Naive thymus-derived CD4-positive, alpha-beta T cell (primary cell): ENCODE measurements at regions of chr6 and their contacts with region 1.

Region 1: DNA sequence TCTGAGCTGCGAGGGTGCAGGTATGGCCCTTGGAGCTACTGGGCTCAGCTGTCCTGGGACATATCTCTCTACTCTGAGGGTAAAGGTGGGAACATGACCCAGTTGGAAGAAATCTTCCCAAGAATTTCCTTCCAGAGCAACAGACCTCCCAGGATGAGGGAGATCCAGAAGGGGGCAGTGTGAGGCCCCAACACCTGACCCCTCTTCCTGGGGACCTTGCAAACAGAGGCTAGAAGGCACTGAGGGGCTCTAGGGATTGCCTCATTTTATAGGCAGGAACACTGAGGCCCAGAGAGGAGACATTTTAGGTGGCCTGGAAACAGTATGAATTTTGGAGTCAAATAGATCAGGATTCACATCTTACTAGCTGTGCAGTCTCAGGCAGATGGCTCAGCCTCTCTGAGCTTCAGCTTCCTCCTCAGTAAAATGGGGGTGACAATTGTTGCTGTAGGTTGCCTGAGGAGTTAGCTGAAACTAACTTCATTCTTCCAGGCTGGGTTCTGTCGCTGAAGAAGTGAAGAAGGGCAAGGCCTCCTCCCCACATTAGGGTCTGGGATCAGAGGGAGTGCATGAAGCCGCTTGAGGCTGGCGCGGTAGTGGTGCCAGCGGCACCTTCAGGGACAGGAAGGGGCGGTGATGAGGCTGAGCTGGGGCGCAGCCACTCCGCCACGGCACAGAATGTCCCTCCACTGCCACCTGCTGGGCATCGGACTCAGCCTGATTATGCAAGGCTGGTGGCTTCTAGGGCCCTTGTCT is 11.4 kb downstream of the KCNK17 start:
- DNase-seq: peak; percentile 60 to 86 (median 79)
- ATAC-seq: peak; percentile 94
- H3K4me3 ChIP-seq: peak overlapping the region; percentile 45
- H3K4me3 Mint-ChIP-seq: peak overlapping the region; percentile 28 to 86 (median 76)
- H3K27ac ChIP-seq: no peak overlapping the region
- H3K27ac Mint-ChIP-seq: peak overlapping the region in 3 of 9 donors; percentile 16 to 48 (median 18)
- H3K4me1 ChIP-seq: no peaks in the 10 kb centered on the region
- H3K4me1 Mint-ChIP-seq: peaks cover 0 to 9% (median 4%) of the 10 kb centered on the region in 7 donors
- H3K27me3 ChIP-seq: no peaks in the 10 kb centered on the region
- H3K27me3 Mint-ChIP-seq: peaks cover 0 to 6% (median 0%) of the 10 kb centered on the region in 5 donors

Region 2: GRCh38 chr6:38901802-38902522 is 400.9 kb before region 1 on chr6:
- CTCF ChIA-PET with region 1: no interaction called
- POLR2A ChIA-PET with region 1: no interaction called
- intact Hi-C with region 1: no loop called
- DNase-seq: no peak
- ATAC-seq: no peak
- H3K4me3 ChIP-seq: no peak overlapping the region
- H3K4me3 Mint-ChIP-seq: no peak overlapping the region
- H3K27ac ChIP-seq: no peak overlapping the region
- H3K27ac Mint-ChIP-seq: no peak overlapping the region
- H3K4me1 ChIP-seq: no peaks in the 10 kb centered on the region
- H3K4me1 Mint-ChIP-seq: no peaks in the 10 kb centered on the region
- H3K27me3 ChIP-seq: no peaks in the 10 kb centered on the region
- H3K27me3 Mint-ChIP-seq: peaks cover 4 to 17% (median 10%) of the 10 kb centered on the region in 5 donors

Region 3: GRCh38 chr6:38912378-38912777 is 390.5 kb before region 1 on chr6:
- CTCF ChIA-PET with region 1: no interaction called
- POLR2A ChIA-PET with region 1: no interaction called
- intact Hi-C with region 1: no loop called
- DNase-seq: no peak
- ATAC-seq: no peak
- H3K4me3 ChIP-seq: no peak overlapping the region
- H3K4me3 Mint-ChIP-seq: no peak overlapping the region
- H3K27ac ChIP-seq: no peak overlapping the region
- H3K27ac Mint-ChIP-seq: no peak overlapping the region
- H3K4me1 ChIP-seq: no peaks in the 10 kb centered on the region
- H3K4me1 Mint-ChIP-seq: no peaks in the 10 kb centered on the region
- H3K27me3 ChIP-seq: peaks cover 0 to 3% of the 10 kb centered on the region in 2 donors
- H3K27me3 Mint-ChIP-seq: peaks cover 0 to 6% (median 0%) of the 10 kb centered on the region in 5 donors

Region 4: GRCh38 chr6:38955861-38956260 is 347.0 kb before region 1 on chr6:
- CTCF ChIA-PET with region 1: no interaction called
- POLR2A ChIA-PET with region 1: no interaction called
- intact Hi-C with region 1: no loop called
- DNase-seq: no peak
- ATAC-seq: no peak
- H3K4me3 ChIP-seq: no peak overlapping the region
- H3K4me3 Mint-ChIP-seq: no peak overlapping the region
- H3K27ac ChIP-seq: no peak overlapping the region
- H3K27ac Mint-ChIP-seq: no peak overlapping the region
- H3K4me1 ChIP-seq: no peaks in the 10 kb centered on the region
- H3K4me1 Mint-ChIP-seq: peaks cover 0 to 1% (median 0%) of the 10 kb centered on the region in 7 donors
- H3K27me3 ChIP-seq: no peaks in the 10 kb centered on the region
- H3K27me3 Mint-ChIP-seq: peaks cover 25 to 43% (median 34%) of the 10 kb centered on the region in 5 donors

Region 5: GRCh38 chr6:38973178-38974054 is 329.4 kb before region 1 on chr6:
- CTCF ChIA-PET with region 1: interaction called, 7 read pairs
- POLR2A ChIA-PET with region 1: no interaction called
- intact Hi-C with region 1: loop called (anchors 1 kb)
- DNase-seq: peak in 6 of 9 donors; percentile 22 to 36 (median 32)
- ATAC-seq: peak; percentile 77
- H3K4me3 ChIP-seq: no peak overlapping the region
- H3K4me3 Mint-ChIP-seq: no peak overlapping the region
- H3K27ac ChIP-seq: no peak overlapping the region
- H3K27ac Mint-ChIP-seq: no peak overlapping the region
- H3K4me1 ChIP-seq: no peaks in the 10 kb centered on the region
- H3K4me1 Mint-ChIP-seq: no peaks in the 10 kb centered on the region
- H3K27me3 ChIP-seq: peaks cover 0 to 3% of the 10 kb centered on the region in 2 donors
- H3K27me3 Mint-ChIP-seq: peaks cover 0 to 52% (median 18%) of the 10 kb centered on the region in 5 donors

Region 6: DNA sequence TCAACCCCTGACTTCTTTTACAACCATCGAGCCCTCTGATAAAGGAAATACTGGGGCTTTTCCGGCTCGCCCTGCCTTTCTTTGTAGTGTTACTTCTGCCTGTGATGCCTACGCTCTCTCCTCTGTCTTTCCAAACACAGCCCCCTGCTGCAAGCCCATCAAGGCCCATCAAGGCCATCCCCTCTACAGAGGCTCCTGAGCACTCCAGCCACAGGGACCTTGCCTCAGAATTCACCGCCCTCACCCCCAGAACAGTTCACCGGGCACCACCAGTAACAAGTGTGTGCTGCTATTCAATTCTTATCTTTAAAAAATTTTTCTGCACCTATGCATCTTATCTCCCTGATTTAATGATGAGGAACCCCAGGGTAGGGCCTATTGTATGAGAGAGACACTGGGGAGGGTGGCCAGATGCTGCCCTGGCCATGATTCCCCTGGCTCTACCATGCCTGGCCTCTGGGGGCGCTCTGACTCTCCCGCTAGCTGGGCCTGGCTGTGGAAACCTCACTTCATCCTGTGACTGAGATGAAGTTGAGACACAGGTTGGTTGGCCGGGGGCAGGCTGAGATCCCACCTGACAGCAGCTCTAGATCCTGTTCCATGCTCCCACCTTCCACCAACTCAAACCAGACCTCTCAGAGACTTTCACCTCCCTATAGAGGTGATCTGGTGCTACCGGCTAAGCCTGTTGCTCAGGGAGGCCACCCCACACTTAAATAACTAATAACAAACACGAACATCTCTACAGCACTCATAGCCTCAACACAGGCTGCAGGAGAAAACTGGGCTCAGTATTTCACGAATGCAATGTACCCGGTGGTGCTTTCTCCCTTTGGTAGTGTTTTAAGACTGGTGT is 273.5 kb before region 1 on chr6:
- CTCF ChIA-PET with region 1: interaction called, 3 read pairs
- POLR2A ChIA-PET with region 1: no interaction called
- intact Hi-C with region 1: loop called in 1 of 2 experiments (anchors 1 kb)
- DNase-seq: peak in 3 of 9 donors; percentile 14 to 62 (median 31)
- ATAC-seq: peak; percentile 67
- H3K4me3 ChIP-seq: no peak overlapping the region
- H3K4me3 Mint-ChIP-seq: no peak overlapping the region
- H3K27ac ChIP-seq: no peak overlapping the region
- H3K27ac Mint-ChIP-seq: no peak overlapping the region
- H3K4me1 ChIP-seq: no peaks in the 10 kb centered on the region
- H3K4me1 Mint-ChIP-seq: no peaks in the 10 kb centered on the region
- H3K27me3 ChIP-seq: no peaks in the 10 kb centered on the region
- H3K27me3 Mint-ChIP-seq: peaks cover 28 to 59% (median 33%) of the 10 kb centered on the region in 5 donors

Region 7: GRCh38 chr6:39166189-39166911 is 136.5 kb before region 1 on chr6:
- CTCF ChIA-PET with region 1: interaction called, 23 read pairs
- POLR2A ChIA-PET with region 1: no interaction called
- intact Hi-C with region 1: loop called (anchors 1 kb)
- DNase-seq: peak; percentile 26 to 86 (median 66)
- ATAC-seq: peak; percentile 86
- H3K4me3 ChIP-seq: no peak overlapping the region
- H3K4me3 Mint-ChIP-seq: peak overlapping the region in 2 of 10 donors; percentile 34 to 44
- H3K27ac ChIP-seq: no peak overlapping the region
- H3K27ac Mint-ChIP-seq: no peak overlapping the region
- H3K4me1 ChIP-seq: peaks cover 0 to 3% of the 10 kb centered on the region in 2 donors
- H3K4me1 Mint-ChIP-seq: peaks cover 0 to 8% (median 5%) of the 10 kb centered on the region in 7 donors
- H3K27me3 ChIP-seq: no peaks in the 10 kb centered on the region
- H3K27me3 Mint-ChIP-seq: peaks cover 0 to 7% (median 4%) of the 10 kb centered on the region in 5 donors

Region 8: DNA sequence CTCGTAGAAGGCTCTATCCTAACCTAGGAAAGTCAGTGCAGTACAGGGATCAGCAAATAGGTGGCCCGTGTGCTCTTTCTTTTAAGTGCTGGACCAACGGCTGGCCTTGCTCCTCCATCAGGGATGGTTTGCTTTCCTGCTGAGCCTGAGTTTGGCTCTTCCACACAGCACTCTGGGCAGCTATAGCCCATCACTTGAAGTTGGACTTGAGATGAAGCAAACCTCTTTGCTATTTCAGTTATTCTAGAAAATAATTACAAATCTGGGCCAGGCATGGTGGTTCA is 86.6 kb after region 1 on chr6:
- CTCF ChIA-PET with region 1: no interaction called
- POLR2A ChIA-PET with region 1: no interaction called
- intact Hi-C with region 1: no loop called
- DNase-seq: no peak
- ATAC-seq: no peak
- H3K4me3 ChIP-seq: no peak overlapping the region
- H3K4me3 Mint-ChIP-seq: no peak overlapping the region
- H3K27ac ChIP-seq: no peak overlapping the region
- H3K27ac Mint-ChIP-seq: no peak overlapping the region
- H3K4me1 ChIP-seq: no peaks in the 10 kb centered on the region
- H3K4me1 Mint-ChIP-seq: no peaks in the 10 kb centered on the region
- H3K27me3 ChIP-seq: no peaks in the 10 kb centered on the region
- H3K27me3 Mint-ChIP-seq: peaks cover 9 to 22% (median 16%) of the 10 kb centered on the region in 5 donors